ENCODE measurements at regions of chr2 and their contacts with region 1.

Region 1: GRCh38 chr2:128754246-128754724 is 435.6 kb upstream of the HS6ST1 start:
- DNase-seq: peak; percentile 93
- H3K4me3 ChIP-seq: peak overlapping the region; percentile 58
- H3K27ac ChIP-seq: peak overlapping the region; percentile 99
- H3K4me1 ChIP-seq: peaks cover 67% of the 10 kb centered on the region
- CTCF ChIP-seq: no peak

Region 2: DNA sequence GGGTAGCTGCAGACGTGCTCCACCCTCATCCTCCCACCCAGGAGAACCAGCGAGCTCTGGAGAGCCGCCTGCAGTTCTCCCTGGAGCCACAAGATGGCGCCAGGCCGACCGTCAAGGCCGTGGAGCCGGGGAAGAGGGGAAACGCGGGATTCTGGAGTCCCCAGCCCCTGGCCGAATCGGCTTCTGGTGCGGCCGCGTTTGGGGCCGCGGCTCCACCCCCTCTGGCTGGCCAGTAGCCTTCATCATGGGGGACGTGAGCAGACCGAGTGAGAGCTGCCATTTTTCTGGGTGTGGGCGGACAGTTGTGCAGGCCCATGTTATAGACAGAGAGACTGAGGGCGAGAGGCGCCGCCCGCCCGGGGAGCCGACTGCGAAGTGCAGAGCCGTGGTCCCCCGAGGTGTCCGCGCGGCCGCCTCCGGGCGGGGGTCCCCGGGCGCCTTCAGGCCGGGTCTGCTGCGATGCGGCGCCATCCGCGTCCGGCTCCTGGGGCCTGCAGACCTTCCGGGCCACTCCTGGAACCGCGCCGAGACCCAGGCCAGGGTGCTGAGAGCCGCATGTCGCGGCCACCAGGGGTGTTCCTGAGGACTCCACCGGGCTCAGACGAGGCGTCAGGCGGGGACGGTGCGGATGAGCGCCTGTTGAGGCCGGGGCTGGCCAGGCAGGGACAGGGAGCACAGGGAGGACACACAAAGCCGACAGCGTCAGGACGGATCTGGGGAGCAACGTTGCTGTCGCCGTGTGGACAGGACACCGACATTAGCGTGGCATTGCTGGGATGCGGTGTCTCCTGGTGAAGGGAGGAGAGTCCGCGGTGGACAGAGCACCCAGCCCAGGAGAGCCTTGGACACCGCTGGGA is 17.4 kb before region 1 on chr2:
- CTCF ChIA-PET with region 1: no interaction called
- POLR2A ChIA-PET with region 1: interaction called, 3 read pairs
- intact Hi-C with region 1: loop called (anchors 1 kb)
- DNase-seq: peak; percentile 75
- H3K4me3 ChIP-seq: no peak overlapping the region
- H3K27ac ChIP-seq: no peak overlapping the region
- H3K4me1 ChIP-seq: peaks cover 24% of the 10 kb centered on the region
- CTCF ChIP-seq: peak; percentile 98

Region 3: GRCh38 chr2:128797937-128798336 is 43.7 kb after region 1 on chr2:
- CTCF ChIA-PET with region 1: no interaction called
- POLR2A ChIA-PET with region 1: no interaction called
- intact Hi-C with region 1: no loop called
- DNase-seq: no peak
- H3K4me3 ChIP-seq: no peak overlapping the region
- H3K27ac ChIP-seq: no peak overlapping the region
- H3K4me1 ChIP-seq: no peaks in the 10 kb centered on the region
- CTCF ChIP-seq: no peak

Region 4: DNA sequence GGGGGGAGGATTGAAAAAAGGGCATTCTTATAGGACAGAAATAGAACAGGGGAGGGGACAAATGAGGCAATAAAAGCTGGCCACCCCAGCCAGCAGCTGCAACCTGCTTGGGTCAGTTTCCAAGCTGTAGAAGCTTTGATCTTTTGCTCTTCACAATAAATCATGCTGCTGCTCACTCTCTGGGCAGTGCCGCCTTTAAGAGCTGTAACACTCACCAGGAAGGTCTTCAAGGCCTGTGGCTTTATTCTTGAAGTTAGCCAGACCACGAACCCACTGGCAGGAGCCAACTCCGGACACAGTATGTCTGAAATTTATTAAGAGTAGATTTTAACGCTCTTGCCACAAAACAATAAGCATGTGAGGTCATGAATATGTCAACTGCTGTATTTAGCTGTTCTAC is 575.3 kb after region 1 on chr2:
- CTCF ChIA-PET with region 1: no interaction called
- POLR2A ChIA-PET with region 1: no interaction called
- intact Hi-C with region 1: no loop called
- DNase-seq: no peak
- H3K4me3 ChIP-seq: no peak overlapping the region
- H3K27ac ChIP-seq: no peak overlapping the region
- H3K4me1 ChIP-seq: no peaks in the 10 kb centered on the region
- CTCF ChIP-seq: no peak

Measured in OCI-LY7 (cell line).